ENCODE measurements at regions of chr2 and their contacts with region 1.

Region 1: GRCh38 chr2:178761759-178762371 is 45.4 kb downstream of the TTN start:
- DNase-seq: peak; percentile 22
- H3K4me3 ChIP-seq: no peak overlapping the region
- H3K27ac ChIP-seq: no peak overlapping the region
- H3K4me1 ChIP-seq: no peaks in the 10 kb centered on the region
- H3K27me3 ChIP-seq: no peaks in the 10 kb centered on the region
- CTCF ChIP-seq: peak; percentile 94
- EP300 ChIP-seq: no peak
- RAD21 ChIP-seq: peak; percentile 86

Region 2: GRCh38 chr2:178328037-178328436 is 433.8 kb before region 1 on chr2:
- CTCF ChIA-PET with region 1: no interaction called
- POLR2A ChIA-PET with region 1: no interaction called
- DNase-seq: no peak
- H3K4me3 ChIP-seq: no peak overlapping the region
- H3K27ac ChIP-seq: peak overlapping the region in 1 of 2 experiments; percentile 9; a peak in 1 of 4 replicates
- H3K4me1 ChIP-seq: 0 out of 4 replicates have a peak, but pooled peaks cover 0 to 9% of the 10 kb centered on the region in 2 experiments
- H3K27me3 ChIP-seq: no peaks in the 10 kb centered on the region
- CTCF ChIP-seq: no peak
- EP300 ChIP-seq: no peak
- RAD21 ChIP-seq: no peak

Region 3: DNA sequence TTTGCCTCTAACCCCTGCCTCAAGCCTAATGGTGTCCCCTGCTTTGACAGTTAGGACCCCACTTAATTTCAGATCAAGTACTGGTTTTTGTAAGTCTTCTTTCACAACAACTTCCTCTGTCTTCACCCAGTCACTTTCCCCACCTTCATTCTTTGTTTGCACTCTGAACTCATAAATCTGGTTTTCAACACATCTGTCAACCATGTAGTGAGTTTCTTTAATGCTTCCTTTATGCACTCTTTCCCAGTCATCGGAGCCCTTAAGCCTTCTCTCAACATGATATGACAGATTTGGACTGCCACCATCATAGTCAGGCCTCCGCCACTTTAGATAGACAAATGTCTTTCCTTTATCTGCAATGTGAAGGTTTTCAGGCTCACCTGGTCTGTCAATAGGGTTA is 172.5 kb before region 1 on chr2:
- CTCF ChIA-PET with region 1: no interaction called
- POLR2A ChIA-PET with region 1: no interaction called
- DNase-seq: no peak
- H3K4me3 ChIP-seq: no peak overlapping the region
- H3K27ac ChIP-seq: no peak overlapping the region
- H3K4me1 ChIP-seq: no peaks in the 10 kb centered on the region
- H3K27me3 ChIP-seq: no peaks in the 10 kb centered on the region
- CTCF ChIP-seq: no peak
- EP300 ChIP-seq: no peak
- RAD21 ChIP-seq: no peak

Region 4: DNA sequence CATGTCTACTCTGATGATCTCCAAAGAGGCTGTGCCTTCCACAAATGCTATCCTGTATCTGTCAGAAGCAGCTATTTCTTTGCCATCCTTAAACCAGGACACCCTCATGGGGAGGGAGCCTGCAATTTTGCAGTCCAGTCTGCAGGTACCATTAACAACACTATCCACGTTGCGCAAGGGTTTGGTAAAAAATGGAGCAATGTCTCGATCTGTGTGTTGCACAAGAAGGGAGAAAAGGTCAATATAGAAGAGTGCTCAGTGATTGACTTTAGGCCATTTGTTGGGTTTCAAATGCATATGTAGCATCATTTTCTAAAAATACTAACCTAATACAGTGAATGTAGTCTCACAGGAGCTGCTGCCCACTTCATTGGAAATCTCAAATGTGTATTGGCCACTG is 29.0 kb before region 1 on chr2:
- CTCF ChIA-PET with region 1: interaction called, 10 read pairs
- POLR2A ChIA-PET with region 1: no interaction called
- DNase-seq: no peak
- H3K4me3 ChIP-seq: no peak overlapping the region
- H3K27ac ChIP-seq: no peak overlapping the region
- H3K4me1 ChIP-seq: no peaks in the 10 kb centered on the region
- H3K27me3 ChIP-seq: no peaks in the 10 kb centered on the region
- CTCF ChIP-seq: no peak
- EP300 ChIP-seq: no peak
- RAD21 ChIP-seq: no peak

Region 5: DNA sequence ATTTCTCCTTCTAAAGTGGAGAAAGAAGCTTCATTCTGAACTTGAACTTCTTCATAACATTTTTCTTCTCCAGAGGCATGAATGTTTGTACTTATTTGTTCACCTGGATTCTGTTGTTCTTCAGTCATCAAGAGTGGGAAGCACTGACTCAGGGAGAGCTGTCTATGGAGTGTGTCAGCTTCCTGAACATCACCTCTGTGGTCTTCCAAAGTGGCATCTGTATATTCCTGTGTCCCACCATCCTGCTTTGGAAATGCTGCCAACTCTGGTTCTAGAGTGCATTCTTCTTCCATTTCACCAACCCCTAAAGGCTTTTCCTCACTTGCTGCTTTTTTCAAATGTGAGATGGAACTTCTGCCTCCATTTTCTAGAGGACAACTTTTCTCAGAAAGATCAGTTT is 14.1 kb before region 1 on chr2:
- CTCF ChIA-PET with region 1: interaction called, 21 read pairs
- POLR2A ChIA-PET with region 1: no interaction called
- DNase-seq: no peak
- H3K4me3 ChIP-seq: no peak overlapping the region
- H3K27ac ChIP-seq: no peak overlapping the region
- H3K4me1 ChIP-seq: no peaks in the 10 kb centered on the region
- H3K27me3 ChIP-seq: no peaks in the 10 kb centered on the region
- CTCF ChIP-seq: no peak
- EP300 ChIP-seq: no peak
- RAD21 ChIP-seq: no peak

Region 6: GRCh38 chr2:178914259-178914849 is 152.5 kb after region 1 on chr2:
- CTCF ChIA-PET with region 1: interaction called, 13 read pairs
- POLR2A ChIA-PET with region 1: no interaction called
- DNase-seq: peak; percentile 64
- H3K4me3 ChIP-seq: peak overlapping the region in 1 of 2 experiments; percentile 34; a peak in 1 of 4 replicates
- H3K27ac ChIP-seq: no peak overlapping the region
- H3K4me1 ChIP-seq: peaks cover 0 to 6% of the 10 kb centered on the region in 2 experiments; a peak in 2 of 4 replicates
- H3K27me3 ChIP-seq: no peaks in the 10 kb centered on the region
- CTCF ChIP-seq: peak; percentile 90
- EP300 ChIP-seq: no peak
- RAD21 ChIP-seq: peak; percentile 92

Region 7: DNA sequence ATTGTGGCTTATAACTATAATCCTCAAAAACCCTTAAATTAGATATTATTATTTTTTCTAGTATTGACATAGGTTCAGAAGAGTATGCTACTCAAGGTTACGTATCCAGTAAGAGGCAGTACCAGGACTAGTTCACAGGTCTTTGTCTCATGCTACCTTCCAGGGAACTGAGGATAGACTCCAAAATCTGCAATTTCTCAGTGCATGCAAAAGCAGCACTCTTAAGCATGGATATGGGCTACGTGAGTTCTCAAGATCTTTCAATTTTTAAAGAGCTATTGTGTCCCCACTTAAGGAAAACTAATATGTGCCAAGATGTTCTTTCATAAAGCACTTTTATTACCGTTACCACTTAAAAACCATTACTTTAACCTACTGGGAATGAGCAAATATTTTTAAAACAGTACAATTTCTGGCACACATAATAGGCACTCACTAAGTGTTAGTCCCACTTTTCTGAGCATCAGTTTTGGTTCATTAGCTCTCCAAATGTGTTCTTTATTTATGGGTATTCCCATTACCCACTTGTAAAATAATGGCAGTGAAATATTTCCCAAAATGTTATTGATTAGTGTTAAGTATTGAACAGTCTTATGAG is 159.2 kb after region 1 on chr2:
- CTCF ChIA-PET with region 1: interaction called, 13 read pairs
- POLR2A ChIA-PET with region 1: no interaction called
- DNase-seq: no peak
- H3K4me3 ChIP-seq: no peak overlapping the region
- H3K27ac ChIP-seq: no peak overlapping the region
- H3K4me1 ChIP-seq: no peaks in the 10 kb centered on the region; a peak in 1 of 4 replicates
- H3K27me3 ChIP-seq: no peaks in the 10 kb centered on the region
- CTCF ChIP-seq: no peak
- EP300 ChIP-seq: no peak
- RAD21 ChIP-seq: no peak

Region 8: GRCh38 chr2:179749210-179749609 is 987.3 kb after region 1 on chr2:
- CTCF ChIA-PET with region 1: interaction called, 10 read pairs
- POLR2A ChIA-PET with region 1: no interaction called
- DNase-seq: no peak
- H3K4me3 ChIP-seq: no peak overlapping the region
- H3K27ac ChIP-seq: no peak overlapping the region
- H3K4me1 ChIP-seq: no peaks in the 10 kb centered on the region
- H3K27me3 ChIP-seq: no peaks in the 10 kb centered on the region
- CTCF ChIP-seq: no peak
- EP300 ChIP-seq: peak in 1 of 2 experiments; percentile 27; a peak in 1 of 4 replicates
- RAD21 ChIP-seq: no peak

Measured in SK-N-SH (cell line).